AG04449 (cell line): ENCODE measurements at regions of chr13 and their contacts with region 1.

Region 1: GRCh38 chr13:20197361-20197834 is 4.7 kb upstream of the GJB2 start:
- DNase-seq: no peak
- H3K4me3 ChIP-seq: no peak overlapping the region
- CTCF ChIP-seq: peak; percentile 58

Region 2: DNA sequence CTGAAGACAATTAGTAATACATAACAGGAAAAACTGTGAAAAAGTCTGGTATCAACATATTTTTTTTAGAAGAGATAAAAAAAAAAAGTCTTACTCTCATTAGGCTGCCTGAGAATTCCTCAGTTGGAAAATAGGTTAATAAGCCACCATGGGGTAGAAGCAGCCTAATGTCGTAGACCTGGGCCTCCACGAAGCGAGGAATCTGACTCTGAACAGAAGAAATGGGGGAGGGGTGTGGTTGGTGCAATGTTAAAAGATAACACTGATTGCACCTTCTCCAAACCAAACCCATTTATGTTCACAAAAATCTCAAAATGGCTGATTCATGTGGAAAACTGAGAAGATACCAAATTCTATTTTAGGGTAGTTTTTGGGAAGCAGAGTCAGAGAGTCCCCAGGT is 501.6 kb before region 1 on chr13:
- CTCF ChIA-PET with region 1: no interaction called
- POLR2A ChIA-PET with region 1: no interaction called
- DNase-seq: no peak
- H3K4me3 ChIP-seq: no peak overlapping the region
- CTCF ChIP-seq: no peak

Region 3: DNA sequence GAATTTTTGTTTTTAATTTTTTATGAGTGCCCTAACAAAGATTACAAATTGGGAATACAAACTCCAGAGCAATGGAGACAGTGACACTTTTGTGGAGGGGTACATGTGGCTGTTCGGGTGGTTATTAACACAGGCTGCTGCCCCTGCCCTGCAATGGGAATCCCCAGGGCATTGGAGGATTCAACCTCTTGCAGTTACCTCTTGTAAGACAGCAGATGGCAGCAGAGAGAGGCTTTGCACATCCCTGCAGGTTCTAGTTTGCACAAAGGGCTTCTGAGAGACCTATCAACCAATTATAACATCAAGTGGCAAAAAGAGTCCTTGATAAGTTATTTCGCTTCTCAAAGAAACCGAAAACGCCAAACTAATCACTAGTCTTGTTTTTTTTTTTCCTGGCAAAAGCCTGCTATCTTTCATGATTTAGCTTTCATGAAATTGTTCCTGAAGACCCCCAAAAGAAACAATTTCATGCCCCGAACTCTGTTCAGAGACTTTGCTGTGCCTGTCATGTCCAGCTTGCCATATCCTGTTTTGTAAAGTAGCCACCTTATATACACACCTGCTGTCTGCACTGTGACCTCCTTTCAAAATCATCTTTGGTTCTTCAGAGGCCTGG is 15.1 kb before region 1 on chr13:
- CTCF ChIA-PET with region 1: interaction called, 31 read pairs
- POLR2A ChIA-PET with region 1: no interaction called
- DNase-seq: peak; percentile 36
- H3K4me3 ChIP-seq: no peak overlapping the region
- CTCF ChIP-seq: peak; percentile 84

Region 4: DNA sequence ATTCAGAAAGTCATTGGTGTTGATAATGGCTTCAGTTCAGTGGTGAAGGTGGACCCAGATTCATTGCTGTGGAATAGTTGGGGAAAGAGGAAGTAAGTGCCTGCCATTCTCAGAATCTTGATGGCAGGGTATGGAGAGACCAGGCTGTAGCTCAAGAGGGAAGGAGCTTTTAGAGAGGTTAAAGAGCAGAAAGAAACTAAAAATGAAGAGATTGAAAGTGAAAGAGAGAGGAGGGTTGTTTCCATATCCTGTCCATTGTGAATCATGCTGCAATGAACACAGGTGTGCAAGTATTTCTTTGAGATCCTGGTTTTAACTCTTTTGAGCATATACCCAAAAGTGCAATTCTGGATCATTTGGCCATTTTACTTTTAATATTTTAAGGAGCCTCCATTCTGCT is 22.2 kb after region 1 on chr13:
- CTCF ChIA-PET with region 1: interaction called, 17 read pairs
- POLR2A ChIA-PET with region 1: no interaction called
- DNase-seq: no peak
- H3K4me3 ChIP-seq: no peak overlapping the region
- CTCF ChIP-seq: no peak